ENCODE measurements at regions of chr3 and their contacts with region 1.

Region 1: GRCh38 chr3:127394984-127395662 is 107.3 kb upstream of the PRR20G start:
- DNase-seq: peak; percentile 58

Region 2: DNA sequence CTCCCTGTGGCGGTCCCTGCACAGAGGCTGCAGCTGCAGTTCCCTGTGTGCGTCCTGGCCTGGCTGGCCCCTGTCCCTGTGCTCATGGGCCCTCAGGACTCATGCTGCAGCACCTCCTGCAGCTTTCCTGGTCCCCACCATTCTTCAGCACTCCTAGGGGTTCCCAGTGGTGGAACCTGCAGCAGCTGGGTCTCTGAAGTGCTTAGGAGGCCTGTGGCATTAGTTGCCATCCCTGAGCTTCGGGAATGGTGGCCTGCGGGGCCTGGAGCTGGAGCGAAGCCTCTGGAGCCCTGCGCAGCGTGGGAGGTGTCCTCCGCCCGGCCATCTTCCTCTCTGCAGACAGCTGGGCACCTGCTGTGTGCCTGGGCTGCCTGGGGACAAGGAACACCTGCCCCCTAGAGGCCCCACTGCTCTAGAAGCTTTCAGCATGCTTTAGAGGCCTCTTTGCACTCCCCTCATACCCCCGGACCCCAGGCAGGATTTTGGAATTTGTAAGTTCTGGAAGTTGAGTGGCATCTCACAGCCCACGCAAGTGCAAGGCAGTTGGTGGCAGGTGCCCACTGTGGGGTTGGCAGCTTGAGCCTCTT is 399.1 kb before region 1 on chr3:
- intact Hi-C with region 1: no loop called
- DNase-seq: no peak

Region 3: DNA sequence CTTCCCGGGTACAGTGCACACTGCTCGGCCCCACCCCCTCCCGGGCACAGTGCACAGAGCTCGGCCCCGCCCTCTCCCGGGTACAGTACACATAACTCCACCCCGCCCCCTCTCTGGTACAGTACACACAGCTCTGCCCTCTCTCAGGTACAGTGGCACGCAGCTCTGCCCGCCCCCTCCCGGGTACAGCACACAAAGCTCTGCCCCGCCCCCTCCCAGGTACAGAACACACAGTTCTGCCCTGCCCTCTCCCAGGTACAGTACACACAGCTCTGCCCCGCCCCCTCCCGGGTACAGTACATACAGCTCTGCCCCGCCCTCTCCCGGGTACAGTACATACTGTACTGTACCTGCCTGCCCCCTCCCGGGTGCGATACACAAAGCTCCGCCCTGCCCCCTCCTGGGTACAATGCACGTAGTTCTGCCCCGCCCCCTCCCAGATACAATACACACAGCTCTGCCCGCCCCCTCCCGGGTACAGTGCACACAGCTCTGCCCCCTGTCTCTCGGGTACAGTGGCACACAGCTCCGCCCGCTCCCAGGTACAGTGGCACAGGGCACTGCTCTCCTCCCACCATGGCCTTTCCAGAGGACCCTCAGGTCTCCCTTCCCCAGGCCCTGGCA is 90.9 kb before region 1 on chr3:
- intact Hi-C with region 1: no loop called
- DNase-seq: no peak

Region 4: GRCh38 chr3:127325629-127325961 is 69.5 kb before region 1 on chr3:
- intact Hi-C with region 1: no loop called
- DNase-seq: peak; percentile 93

Region 5: DNA sequence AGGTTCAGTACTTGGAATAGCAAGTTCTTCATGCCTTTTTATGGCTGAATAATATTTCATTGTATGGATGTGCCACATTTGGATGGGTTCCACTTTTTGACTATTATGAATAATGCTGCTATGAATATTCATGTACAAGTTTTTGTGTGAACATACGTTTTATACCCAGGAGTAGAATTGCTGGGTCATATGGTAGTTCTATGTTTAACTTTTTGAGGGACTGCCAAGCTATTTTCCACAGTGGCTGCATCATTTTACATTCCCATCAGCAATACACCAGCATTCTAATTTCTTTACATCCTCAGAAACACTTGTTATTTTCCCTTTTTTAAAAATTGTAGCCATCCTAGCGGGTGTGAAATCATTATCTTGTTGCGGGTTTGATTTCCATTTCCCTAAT is 31.2 kb before region 1 on chr3:
- intact Hi-C with region 1: loop called in 1 of 2 experiments (anchors 1 kb)
- DNase-seq: no peak

Measured in posterior vena cava (tissue), 2 donors.